ENCODE measurements at regions of chr13 and their contacts with region 1.

Region 1: GRCh38 chr13:20713751-20714150 is 10.3 kb downstream of the IL17D start:
- DNase-seq: peak in 1 of 2 donors; percentile 81
- H3K4me3 ChIP-seq: peak overlapping the region in 1 of 2 donors; percentile 61
- H3K27ac ChIP-seq: peak overlapping the region; percentile 74 to 80
- H3K4me1 ChIP-seq: peaks cover 3 to 26% of the 10 kb centered on the region in 2 donors
- H3K27me3 ChIP-seq: no peaks in the 10 kb centered on the region
- CTCF ChIP-seq: no peak

Region 2: GRCh38 chr13:20495082-20496023 is 218.4 kb before region 1 on chr13:
- intact Hi-C with region 1: loop called (anchors 10 kb)
- DNase-seq: peak in 1 of 2 donors; percentile 81
- H3K4me3 ChIP-seq: peak overlapping the region in 1 of 2 donors; percentile 34
- H3K27ac ChIP-seq: no peak overlapping the region
- H3K4me1 ChIP-seq: peaks cover 0 to 4% of the 10 kb centered on the region in 2 donors
- H3K27me3 ChIP-seq: no peaks in the 10 kb centered on the region
- CTCF ChIP-seq: peak; percentile 68 to 94 (median 93)

Region 3: DNA sequence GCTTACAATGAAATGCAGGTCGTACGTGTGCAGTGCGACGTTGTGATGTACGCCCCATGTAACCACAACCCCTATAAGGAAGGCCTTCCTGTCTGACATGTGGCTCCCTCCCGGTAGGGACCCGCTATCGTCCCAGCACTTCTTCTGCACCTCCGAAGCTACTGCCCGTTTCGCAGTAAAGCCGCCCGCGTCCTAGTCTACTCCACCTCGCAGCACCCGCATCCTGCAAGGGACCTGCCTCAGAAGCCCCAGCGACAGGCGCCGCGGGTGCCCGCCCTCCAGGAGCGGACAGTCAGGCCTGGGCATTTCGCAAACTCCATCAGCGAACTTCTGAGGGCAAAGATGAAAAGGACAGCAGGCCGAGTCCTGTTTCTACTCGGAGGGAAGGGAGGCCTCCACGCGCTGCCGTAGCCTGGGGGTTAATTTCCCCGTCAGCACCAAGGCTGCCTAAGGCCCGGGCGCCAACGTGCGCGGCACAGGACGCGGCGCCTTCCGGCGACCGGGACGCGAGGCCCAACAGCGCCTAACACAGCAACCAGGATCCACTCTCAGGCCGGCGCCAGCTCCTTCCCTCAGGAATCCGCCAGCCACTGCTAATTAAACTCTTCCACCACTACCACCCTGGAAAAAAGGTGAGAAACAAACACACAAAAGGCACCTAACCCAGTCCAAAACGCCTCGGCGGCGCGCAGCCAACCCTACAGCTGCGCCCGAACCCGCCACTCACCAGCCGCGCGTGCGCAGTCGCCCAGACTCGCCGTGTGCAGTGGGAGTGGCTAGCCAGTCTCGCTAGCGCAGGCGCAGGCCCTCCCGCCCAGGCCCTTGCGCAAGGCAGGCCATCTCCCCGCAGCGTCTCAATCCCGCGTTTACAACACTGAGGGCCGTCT is 59.7 kb after region 1 on chr13 and contains the start of gene EEF1AKMT1:
- intact Hi-C with region 1: loop called (anchors 2 kb)
- DNase-seq: peak; percentile 60 to 96
- H3K4me3 ChIP-seq: peak within 1 kb of the TSS; percentile 61 to 80
- H3K27ac ChIP-seq: peak within 1 kb of the TSS; percentile 85 to 87
- H3K4me1 ChIP-seq: peaks cover 0 to 7% of the 10 kb centered on the region in 2 donors
- H3K27me3 ChIP-seq: no peaks in the 10 kb centered on the region
- CTCF ChIP-seq: no peak
- total RNA-seq, gene EEF1AKMT1: not detected

Region 4: GRCh38 chr13:20828539-20829364 is 115.0 kb after region 1 on chr13:
- intact Hi-C with region 1: loop called (anchors 1 kb)
- DNase-seq: no peak
- H3K4me3 ChIP-seq: peak overlapping the region; percentile 41 to 50
- H3K27ac ChIP-seq: peak overlapping the region in 1 of 2 donors; percentile 6
- H3K4me1 ChIP-seq: peaks cover 4 to 14% of the 10 kb centered on the region in 2 donors
- H3K27me3 ChIP-seq: no peaks in the 10 kb centered on the region
- CTCF ChIP-seq: peak; percentile 70 to 87 (median 73)

Region 5: DNA sequence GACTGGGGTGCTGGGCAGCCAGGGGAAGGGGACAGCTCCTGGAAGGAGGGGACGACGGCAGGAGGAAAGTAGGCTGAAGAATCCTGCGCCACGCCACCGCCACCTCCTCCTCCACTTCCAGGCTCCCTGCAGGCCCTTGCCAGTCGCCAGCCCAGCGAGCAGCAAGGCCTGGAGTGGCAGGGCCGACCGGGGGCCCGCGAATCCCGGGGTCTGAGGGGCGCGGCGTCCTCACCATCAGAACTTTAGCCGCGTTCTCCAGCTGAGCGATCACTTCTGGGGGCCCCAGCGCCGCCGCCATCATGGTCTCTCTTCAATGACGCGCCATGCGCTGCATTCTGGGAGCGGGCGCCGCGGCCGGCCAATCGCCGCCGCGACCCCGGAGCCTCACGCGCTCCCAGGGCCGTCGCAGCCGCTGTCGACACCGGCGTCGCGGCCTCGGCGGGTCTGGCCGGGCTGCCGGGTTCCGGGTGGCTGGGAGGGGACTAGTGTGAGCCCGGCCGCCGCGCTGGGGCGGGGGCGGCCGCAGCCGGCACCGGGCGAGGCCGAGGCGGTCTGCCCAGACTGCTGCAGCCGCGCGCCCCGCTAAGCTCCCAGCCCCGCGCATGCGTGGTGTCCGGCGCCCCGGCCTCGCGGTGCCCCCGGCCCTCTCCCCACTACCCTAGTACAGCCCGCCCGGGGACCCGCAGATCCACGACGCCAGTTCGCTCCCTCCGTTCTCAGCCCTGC is 188.8 kb after region 1 on chr13 and contains the start of gene XPO4:
- intact Hi-C with region 1: loop called (anchors 5 kb)
- DNase-seq: peak; percentile 16 to 88
- H3K4me3 ChIP-seq: peak within 1 kb of the TSS; percentile 81 to 88
- H3K27ac ChIP-seq: peak within 1 kb of the TSS; percentile 93
- H3K4me1 ChIP-seq: peaks cover 3 to 10% of the 10 kb centered on the region in 2 donors
- H3K27me3 ChIP-seq: no peaks in the 10 kb centered on the region
- CTCF ChIP-seq: no peak
- total RNA-seq, gene XPO4: 5.1 TPM

Region 6: DNA sequence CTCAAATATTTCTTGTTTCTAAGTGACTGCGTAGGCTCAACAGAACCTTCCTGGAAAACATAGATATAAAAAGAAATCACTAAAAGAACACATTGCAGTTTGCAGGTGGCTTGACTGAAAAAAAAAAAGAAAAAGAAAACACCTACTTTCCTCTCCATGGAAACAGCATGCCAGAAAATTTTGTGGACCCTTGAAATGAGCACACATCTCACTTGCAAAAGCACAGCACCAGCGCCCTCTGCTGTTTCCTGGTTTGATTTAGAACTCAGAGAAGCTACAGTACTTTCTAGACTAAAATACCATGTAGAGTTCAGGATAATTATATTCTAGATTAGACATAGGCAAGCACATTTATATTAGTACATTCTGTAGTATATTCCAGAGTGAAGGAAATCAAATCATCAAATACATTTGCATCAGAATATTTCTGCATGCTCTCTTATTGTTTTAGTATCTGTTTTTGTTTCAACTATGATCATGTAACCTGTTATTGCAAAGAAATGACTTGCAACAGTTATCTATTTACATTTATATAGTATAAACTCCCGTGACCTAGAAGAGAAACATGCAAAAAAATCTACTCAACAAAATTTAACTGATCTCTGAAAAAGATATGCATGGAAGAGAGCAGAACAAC is 211.1 kb after region 1 on chr13:
- intact Hi-C with region 1: loop called (anchors 5 kb)
- DNase-seq: peak in 1 of 2 donors; percentile 86
- H3K4me3 ChIP-seq: no peak overlapping the region
- H3K27ac ChIP-seq: no peak overlapping the region
- H3K4me1 ChIP-seq: no peaks in the 10 kb centered on the region
- H3K27me3 ChIP-seq: no peaks in the 10 kb centered on the region
- CTCF ChIP-seq: peak; percentile 45 to 77 (median 68)

Region 7: DNA sequence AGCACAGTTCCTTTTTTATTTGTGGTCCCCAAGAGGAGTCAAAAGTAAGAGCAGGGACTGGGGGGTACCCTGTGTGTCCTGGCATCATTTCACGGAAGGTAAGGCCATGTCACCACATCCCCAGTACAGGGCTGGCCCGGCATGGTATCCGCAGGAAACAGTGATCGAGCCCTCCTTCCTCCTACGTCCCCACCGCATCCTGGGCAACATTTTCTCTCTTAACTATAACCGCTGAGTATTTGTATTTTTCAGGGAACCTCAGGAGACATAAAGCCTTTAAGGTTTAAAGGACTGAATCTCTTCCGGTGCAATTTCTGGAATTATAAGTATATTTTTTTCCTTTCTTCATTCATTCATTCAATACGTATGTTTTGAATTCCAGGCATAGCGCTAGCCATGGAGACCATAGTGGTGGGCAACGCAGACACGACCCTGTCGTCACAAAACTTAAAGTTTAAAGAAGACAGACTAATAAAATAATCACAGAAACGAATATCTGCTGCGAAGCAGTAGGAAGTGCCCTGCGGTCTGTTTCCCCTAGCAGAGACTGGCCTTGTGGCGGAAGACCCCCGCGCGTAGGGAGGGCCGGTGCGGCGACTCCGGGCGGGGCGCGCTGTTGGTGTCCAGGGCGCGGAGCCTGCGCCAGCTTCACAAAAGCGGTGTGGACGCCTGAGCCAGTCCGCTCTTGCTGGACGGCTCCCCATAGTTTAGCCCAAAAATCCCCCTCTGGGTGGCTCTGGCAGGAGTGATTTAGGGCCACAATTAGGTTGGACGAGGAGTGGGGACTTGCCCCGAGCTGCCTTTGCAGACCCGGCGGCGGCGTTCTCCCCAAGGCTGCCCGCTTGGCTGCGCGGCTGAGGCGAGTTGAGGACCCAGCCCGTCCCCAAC is 361.5 kb after region 1 on chr13:
- intact Hi-C with region 1: loop called (anchors 10 kb)
- DNase-seq: peak in 1 of 2 donors; percentile 74
- H3K4me3 ChIP-seq: peak overlapping the region; percentile 64 to 90
- H3K27ac ChIP-seq: peak overlapping the region; percentile 77 to 81
- H3K4me1 ChIP-seq: peaks cover 5 to 17% of the 10 kb centered on the region in 2 donors
- H3K27me3 ChIP-seq: no peaks in the 10 kb centered on the region
- CTCF ChIP-seq: no peak